ENCODE measurements at regions of chr10 and their contacts with region 1.

Region 1: DNA sequence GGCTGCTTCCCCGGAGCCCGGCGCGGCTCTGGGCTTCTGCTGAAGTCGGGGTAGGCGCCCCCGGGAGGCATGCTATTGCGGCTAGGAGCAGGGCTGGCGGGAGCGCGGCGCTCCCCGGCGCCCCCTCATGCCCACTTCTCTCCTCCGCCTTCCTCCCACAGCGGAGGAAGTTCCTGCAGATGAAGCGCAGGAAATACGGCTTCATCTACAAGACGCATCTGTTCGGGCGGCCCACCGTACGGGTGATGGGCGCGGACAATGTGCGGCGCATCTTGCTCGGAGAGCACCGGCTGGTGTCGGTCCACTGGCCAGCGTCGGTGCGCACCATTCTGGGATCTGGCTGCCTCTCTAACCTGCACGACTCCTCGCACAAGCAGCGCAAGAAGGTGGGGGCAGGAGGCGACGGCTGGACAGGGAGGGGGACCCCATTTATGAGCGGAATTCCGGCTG is 479 bp downstream of the CYP26A1 start:
- DNase-seq: no peak
- ATAC-seq: peak; percentile 8
- H3K4me3 Mint-ChIP-seq: peak overlapping the region; percentile 63
- H3K27ac Mint-ChIP-seq: no peak overlapping the region
- H3K4me1 Mint-ChIP-seq: peaks cover 25% of the 10 kb centered on the region
- H3K27me3 Mint-ChIP-seq: peaks cover 63% of the 10 kb centered on the region
- CTCF ChIP-seq: no peak

Region 2: GRCh38 chr10:92689663-92690210 is 384.4 kb before region 1 on chr10 and contains the start of gene HHEX:
- CTCF ChIA-PET with region 1: no interaction called
- POLR2A ChIA-PET with region 1: no interaction called
- intact Hi-C with region 1: loop called (anchors 10 kb)
- DNase-seq: peak; percentile 41
- ATAC-seq: peak; percentile 64
- H3K4me3 Mint-ChIP-seq: peak within 1 kb of the TSS; percentile 50
- H3K27ac Mint-ChIP-seq: no peak within 1 kb of the TSS
- H3K4me1 Mint-ChIP-seq: peaks cover 22% of the 10 kb centered on the region
- H3K27me3 Mint-ChIP-seq: peaks cover 62% of the 10 kb centered on the region
- CTCF ChIP-seq: no peak
- total RNA-seq, gene HHEX: 0.34 to 0.58 TPM

Region 3: GRCh38 chr10:92965314-92965713 is 108.9 kb before region 1 on chr10:
- CTCF ChIA-PET with region 1: interaction called, 8 read pairs
- POLR2A ChIA-PET with region 1: no interaction called
- intact Hi-C with region 1: loop called (anchors 10 kb)
- DNase-seq: no peak
- ATAC-seq: no peak
- H3K4me3 Mint-ChIP-seq: no peak overlapping the region
- H3K27ac Mint-ChIP-seq: no peak overlapping the region
- H3K4me1 Mint-ChIP-seq: no peaks in the 10 kb centered on the region
- H3K27me3 Mint-ChIP-seq: no peaks in the 10 kb centered on the region
- CTCF ChIP-seq: peak; percentile 62

Measured in activated CD8-positive, alpha-beta T cell treated with anti-CD3 and anti-CD28 coated beads for 36 hours (primary cell).